CD8-positive, alpha-beta memory T cell (primary cell): ENCODE measurements at regions of chr12 and their contacts with region 1.

Region 1: GRCh38 chr12:47812797-47813510 is 6.7 kb downstream of the HDAC7 start:
- DNase-seq: peak; percentile 79 to 93 (median 82)
- H3K4me3 ChIP-seq: peak overlapping the region; percentile 72
- H3K4me3 Mint-ChIP-seq: peak overlapping the region; percentile 84 to 94 (median 90)
- H3K27ac ChIP-seq: peak overlapping the region; percentile 86
- H3K27ac Mint-ChIP-seq: peak overlapping the region; percentile 93 to 99 (median 98)
- H3K4me1 ChIP-seq: peaks cover 94% of the 10 kb centered on the region
- H3K4me1 Mint-ChIP-seq: peaks cover 85 to 99% (median 98%) of the 10 kb centered on the region in 3 donors
- H3K27me3 ChIP-seq: no peaks in the 10 kb centered on the region
- H3K27me3 Mint-ChIP-seq: peaks cover 0 to 4% of the 10 kb centered on the region in 2 donors

Region 2: DNA sequence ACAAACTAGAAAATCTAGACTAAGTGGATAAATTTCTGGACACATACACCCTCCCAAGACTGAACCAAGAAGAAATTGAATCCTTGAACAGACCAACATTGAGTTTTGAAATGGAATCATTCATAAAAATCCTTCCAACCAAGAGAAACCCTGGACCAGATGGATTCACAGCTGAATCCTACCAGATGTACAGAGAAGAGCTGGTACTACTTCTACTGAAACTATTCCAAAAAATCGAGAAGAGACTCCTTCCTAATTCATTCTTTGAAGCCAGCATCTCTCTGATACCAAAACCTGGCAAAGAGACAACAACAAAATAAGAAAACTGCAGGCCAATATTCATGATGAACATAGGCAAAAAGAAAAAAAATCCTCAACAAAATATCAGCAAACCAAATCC is 334.5 kb before region 1 on chr12:
- CTCF ChIA-PET with region 1: no interaction called
- POLR2A ChIA-PET with region 1: no interaction called
- DNase-seq: no peak
- H3K4me3 ChIP-seq: no peak overlapping the region
- H3K4me3 Mint-ChIP-seq: no peak overlapping the region
- H3K27ac ChIP-seq: no peak overlapping the region
- H3K27ac Mint-ChIP-seq: no peak overlapping the region
- H3K4me1 ChIP-seq: no peaks in the 10 kb centered on the region
- H3K4me1 Mint-ChIP-seq: no peaks in the 10 kb centered on the region
- H3K27me3 ChIP-seq: no peaks in the 10 kb centered on the region
- H3K27me3 Mint-ChIP-seq: peaks cover 14 to 27% of the 10 kb centered on the region in 2 donors

Region 3: DNA sequence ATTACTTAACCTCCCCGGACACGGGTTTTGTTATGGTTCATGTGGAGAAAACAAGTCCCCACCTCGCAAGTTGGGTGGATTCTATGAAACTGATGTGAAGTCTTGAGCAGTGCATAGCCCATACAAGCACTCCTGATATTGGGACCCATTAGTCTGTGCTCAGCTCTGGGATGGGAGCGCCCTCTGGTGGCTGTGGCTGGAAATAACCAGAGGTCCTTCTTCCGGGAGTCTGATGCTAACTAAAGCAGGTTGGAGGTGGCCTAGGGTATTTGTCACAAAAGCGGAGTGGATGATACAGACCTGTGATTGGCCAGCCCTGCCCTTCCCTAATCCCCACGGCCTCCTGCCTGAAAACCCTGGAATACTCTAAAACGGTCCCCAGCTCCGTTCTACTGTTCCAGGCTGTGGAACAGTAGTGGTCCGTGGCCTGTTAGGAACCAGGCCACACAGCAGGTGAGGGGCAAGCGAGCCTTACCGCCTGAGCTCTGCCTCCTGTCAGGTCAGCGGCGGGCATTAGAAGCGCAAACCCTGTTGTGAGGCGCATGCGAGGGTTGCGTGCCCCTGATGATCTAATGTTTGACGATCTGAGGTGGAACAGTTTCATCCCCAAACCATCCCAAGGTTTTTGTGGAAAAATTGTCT is 33.5 kb before region 1 on chr12:
- CTCF ChIA-PET with region 1: interaction called, 18 read pairs
- POLR2A ChIA-PET with region 1: interaction called, 3 read pairs
- DNase-seq: peak; percentile 77 to 92 (median 85)
- H3K4me3 ChIP-seq: no peak overlapping the region
- H3K4me3 Mint-ChIP-seq: peak overlapping the region in 1 of 7 donors; percentile 75
- H3K27ac ChIP-seq: no peak overlapping the region
- H3K27ac Mint-ChIP-seq: peak overlapping the region in 5 of 8 donors; percentile 8 to 66 (median 39)
- H3K4me1 ChIP-seq: peaks cover 8% of the 10 kb centered on the region
- H3K4me1 Mint-ChIP-seq: peaks cover 7 to 15% (median 9%) of the 10 kb centered on the region in 3 donors
- H3K27me3 ChIP-seq: no peaks in the 10 kb centered on the region
- H3K27me3 Mint-ChIP-seq: no peaks in the 10 kb centered on the region

Region 4: GRCh38 chr12:47797441-47797840 is 15.5 kb before region 1 on chr12:
- CTCF ChIA-PET with region 1: interaction called, 11 read pairs
- POLR2A ChIA-PET with region 1: interaction called, 4 read pairs
- DNase-seq: peak in 4 of 5 donors; percentile 16 to 66 (median 54)
- H3K4me3 ChIP-seq: no peak overlapping the region
- H3K4me3 Mint-ChIP-seq: no peak overlapping the region
- H3K27ac ChIP-seq: no peak overlapping the region
- H3K27ac Mint-ChIP-seq: peak overlapping the region in 3 of 8 donors; percentile 28 to 84 (median 61)
- H3K4me1 ChIP-seq: peaks cover 34% of the 10 kb centered on the region
- H3K4me1 Mint-ChIP-seq: peaks cover 17 to 34% (median 29%) of the 10 kb centered on the region in 3 donors
- H3K27me3 ChIP-seq: no peaks in the 10 kb centered on the region
- H3K27me3 Mint-ChIP-seq: no peaks in the 10 kb centered on the region

Region 5: DNA sequence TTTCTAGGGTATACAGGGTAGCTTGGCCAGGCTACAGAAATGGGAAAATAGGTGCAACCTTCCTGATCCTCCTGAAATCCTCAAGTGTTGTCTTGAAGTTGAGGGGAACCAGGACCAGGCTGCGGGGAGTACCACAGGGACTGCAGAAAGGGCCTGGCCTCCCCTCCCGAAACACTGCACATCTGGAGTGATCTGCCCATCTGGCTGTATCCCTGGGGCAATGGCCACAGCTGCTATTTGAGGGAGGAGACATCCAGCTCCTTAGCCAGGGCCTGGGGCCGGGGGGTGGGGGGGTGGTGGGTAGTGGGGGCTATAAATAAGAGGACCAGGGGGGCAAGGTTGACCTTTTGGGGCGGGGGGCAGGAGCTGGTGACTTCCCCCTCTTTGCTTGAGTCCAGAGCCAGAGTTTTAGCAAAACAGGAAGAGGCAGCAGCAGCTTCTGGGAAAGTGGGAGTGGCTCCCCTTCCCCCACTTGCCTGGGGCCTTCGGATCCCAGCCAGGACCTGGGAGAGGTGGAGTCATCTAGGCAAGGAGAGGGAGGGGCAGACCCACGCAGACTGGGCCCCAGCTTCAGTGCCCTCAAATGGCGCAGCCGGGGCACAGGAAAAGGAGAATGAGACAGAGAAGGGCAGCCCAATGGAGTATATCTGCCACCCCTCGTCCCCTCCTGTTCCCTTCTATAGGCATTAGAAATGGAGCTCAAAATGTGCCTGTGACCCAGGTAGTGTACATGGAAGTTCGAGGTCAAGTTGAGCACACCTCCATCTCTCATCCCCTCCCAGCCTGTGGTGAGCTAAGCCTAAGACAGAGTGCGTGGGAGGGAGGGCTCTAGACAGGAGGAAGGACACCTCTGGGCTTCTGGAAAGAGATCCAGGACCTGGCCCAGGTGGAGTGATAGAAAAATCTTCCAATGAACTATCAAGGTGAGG is 15.9 kb after region 1 on chr12:
- CTCF ChIA-PET with region 1: interaction called, 452 read pairs
- POLR2A ChIA-PET with region 1: interaction called, 13 read pairs
- DNase-seq: no peak
- H3K4me3 ChIP-seq: no peak overlapping the region
- H3K4me3 Mint-ChIP-seq: no peak overlapping the region
- H3K27ac ChIP-seq: peak overlapping the region; percentile 28
- H3K27ac Mint-ChIP-seq: peak overlapping the region in 2 of 8 donors; percentile 11 to 61
- H3K4me1 ChIP-seq: peaks cover 94% of the 10 kb centered on the region
- H3K4me1 Mint-ChIP-seq: peaks cover 56 to 80% (median 76%) of the 10 kb centered on the region in 3 donors
- H3K27me3 ChIP-seq: no peaks in the 10 kb centered on the region
- H3K27me3 Mint-ChIP-seq: no peaks in the 10 kb centered on the region